Gastrocnemius medialis (tissue), 4 donors: ENCODE measurements at regions of chr14 and their contacts with region 1.

Region 1: DNA sequence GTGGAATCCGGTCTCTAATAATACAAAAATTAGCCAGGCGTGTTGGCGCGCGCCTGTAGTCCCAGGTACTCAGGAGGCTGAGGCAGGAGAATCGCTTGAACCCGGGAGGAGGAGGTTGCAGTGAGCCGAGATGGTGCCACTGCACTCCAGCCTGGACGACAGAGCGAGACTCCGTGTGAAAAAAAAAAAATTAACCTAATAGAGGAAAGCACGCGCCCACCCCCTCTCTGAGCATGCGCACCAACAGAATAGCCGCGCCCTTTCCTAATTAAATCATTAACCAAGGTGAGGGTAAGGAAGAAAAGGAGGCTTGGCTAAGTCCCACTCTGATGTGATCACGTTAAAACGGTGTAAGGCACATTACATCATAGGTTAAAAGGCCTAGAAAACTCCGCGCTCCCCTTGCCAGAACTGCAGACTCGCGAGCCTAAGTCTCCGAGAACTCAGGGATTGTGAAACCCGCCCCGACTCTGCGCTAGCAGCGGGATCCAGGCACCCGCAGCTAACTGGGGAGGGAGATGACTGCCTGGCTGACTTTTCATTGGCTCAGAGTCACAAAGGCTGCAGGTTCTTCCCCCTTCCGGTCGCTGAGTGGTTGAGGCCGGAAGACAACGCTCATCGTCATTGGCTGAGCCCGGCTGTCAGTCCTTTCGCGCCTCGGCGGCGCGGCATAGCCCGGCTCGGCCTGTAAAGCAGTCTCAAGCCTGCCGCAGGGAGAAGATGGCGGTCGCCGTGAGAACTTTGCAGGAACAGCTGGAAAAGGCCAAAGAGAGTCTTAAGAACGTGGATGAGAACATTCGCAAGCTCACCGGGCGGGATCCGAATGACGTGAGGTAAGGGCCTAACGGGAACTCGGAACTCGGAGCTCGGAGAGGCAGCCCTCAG is at the start of gene PNN:
- DNase-seq: peak; percentile 98 to 99
- ATAC-seq: peak; percentile 94 to 97
- H3K4me3 ChIP-seq: peak within 1 kb of the TSS; percentile 71 to 96 (median 88)
- H3K27ac ChIP-seq: peak within 1 kb of the TSS; percentile 90 to 95 (median 93)
- H3K4me1 ChIP-seq: peaks cover 18 to 21% of the 10 kb centered on the region in 2 donors
- H3K27me3 ChIP-seq: no peaks in the 10 kb centered on the region
- CTCF ChIP-seq: no peak
- POLR2A ChIP-seq: peak; percentile 92 to 94
- total RNA-seq, gene PNN: 9.2 to 16.2 (median 13.7) TPM

Region 2: DNA sequence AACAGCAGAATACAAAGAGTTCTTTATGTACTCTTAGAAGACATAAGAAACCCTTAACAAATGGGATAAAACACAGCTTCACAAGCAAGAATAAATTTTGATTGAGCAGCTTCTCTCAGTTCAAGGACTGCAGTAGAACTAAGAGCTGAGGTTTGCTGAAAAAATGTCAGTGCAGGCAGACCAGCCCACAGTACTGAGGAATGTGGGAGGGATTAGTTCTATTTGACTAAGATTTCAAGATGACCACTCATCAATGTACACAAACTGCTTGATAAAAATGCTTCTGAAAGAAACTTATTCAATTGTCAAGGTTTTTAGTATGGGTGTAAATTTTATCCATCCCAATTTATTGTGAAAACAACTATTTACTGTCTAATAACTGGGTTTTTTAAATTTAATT is 210.2 kb before region 1 on chr14:
- in situ Hi-C with region 1: no loop called
- intact Hi-C with region 1: no loop called
- DNase-seq: no peak
- ATAC-seq: no peak
- H3K4me3 ChIP-seq: no peak overlapping the region
- H3K27ac ChIP-seq: no peak overlapping the region
- H3K4me1 ChIP-seq: no peaks in the 10 kb centered on the region
- H3K27me3 ChIP-seq: no peaks in the 10 kb centered on the region
- CTCF ChIP-seq: no peak
- POLR2A ChIP-seq: no peak

Region 3: DNA sequence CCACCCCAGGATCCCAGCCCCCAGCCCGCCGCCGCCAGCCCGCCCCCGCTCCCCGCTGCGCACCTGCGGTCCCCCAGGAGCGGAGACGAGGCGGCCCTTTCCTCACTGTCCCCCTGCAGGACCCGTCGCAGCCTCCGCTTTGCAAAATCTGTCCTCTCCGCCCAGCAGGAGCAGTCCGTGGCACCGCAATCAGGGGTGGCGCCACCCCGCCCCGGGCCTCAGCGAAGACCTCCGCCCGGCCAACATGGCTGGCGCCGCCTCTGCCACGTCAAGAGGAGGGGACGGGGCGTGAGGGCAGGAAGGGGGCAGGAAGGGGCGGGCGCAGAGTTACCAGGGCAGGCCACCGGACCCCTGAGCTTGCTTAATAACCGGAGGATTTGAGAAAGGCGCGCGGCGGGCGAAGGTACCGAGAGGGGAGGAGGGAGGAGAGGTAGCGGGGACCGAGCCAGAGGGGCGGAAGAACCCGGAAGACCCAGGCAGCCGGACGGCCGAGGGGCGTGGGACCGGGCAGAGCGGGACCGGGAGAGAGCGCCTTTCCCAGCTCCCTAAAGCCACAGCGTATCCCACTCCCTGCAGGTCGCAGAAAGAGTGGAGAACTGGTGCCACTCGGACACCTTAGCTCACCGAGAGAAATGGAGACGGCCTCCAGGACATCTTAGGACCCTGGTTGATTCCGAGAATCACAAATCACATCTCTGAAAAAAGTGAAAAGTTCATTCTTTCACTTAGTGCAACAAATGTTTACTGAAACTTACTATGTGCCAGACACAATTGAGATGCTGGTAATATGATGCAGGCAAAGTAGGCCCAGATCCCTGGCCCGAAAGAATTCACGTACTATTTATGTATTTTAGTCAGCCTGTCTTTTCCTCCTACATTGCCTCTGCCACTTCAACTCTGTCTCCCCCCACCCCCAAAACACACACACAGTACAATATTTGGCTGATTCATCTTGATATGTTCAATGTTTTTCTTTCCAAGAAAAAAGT is 71.5 kb before region 1 on chr14 and contains the start of gene SEC23A:
- in situ Hi-C with region 1: no loop called
- intact Hi-C with region 1: loop called (anchors 1 kb)
- DNase-seq: peak; percentile 79 to 90
- ATAC-seq: peak; percentile 93 to 94
- H3K4me3 ChIP-seq: peak within 1 kb of the TSS; percentile 69 to 88 (median 77)
- H3K27ac ChIP-seq: peak within 1 kb of the TSS; percentile 84 to 97 (median 95)
- H3K4me1 ChIP-seq: peaks cover 6 to 23% of the 10 kb centered on the region in 2 donors
- H3K27me3 ChIP-seq: no peaks in the 10 kb centered on the region
- CTCF ChIP-seq: no peak
- POLR2A ChIP-seq: peak; percentile 84
- total RNA-seq, gene SEC23A: 79.9 to 183 (median 93.9) TPM

Region 4: DNA sequence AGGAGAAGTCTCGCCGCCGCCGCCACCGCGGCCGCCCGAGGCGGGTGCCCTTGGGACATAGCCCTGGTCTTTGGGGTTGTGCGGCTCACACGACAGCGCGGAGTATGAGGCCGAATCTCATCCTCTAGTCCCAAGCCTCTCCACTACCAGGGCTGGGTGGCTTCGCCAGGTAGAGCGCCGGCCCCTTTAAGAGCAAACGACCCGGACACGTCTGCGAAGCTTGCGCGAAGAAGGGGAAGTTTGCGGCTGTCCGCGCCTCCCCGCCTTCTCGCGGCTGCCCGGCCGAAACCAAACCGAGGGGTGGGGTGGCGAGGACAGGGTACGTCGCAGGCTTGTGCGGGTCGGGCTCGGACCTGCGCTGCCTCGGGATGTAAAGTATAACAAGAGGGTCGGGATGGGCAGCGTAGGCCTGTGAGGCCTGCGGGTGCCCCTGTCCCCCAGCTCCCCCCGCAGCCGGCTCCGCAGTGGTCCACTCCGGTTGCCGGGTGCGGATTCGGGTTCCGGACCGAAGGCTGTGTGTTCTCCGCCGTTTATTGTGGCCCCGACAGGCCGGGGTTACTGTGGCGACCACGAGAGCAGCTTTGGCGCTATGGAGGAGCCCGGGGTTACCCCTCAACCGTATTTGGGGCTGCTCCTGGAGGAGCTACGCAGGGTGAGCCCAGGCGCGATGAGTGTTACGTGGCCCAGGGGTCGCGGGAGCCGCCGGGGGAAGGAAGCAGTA is 92.2 kb after region 1 on chr14:
- in situ Hi-C with region 1: loop called in 1 of 4 experiments (anchors 10 kb)
- intact Hi-C with region 1: loop called (anchors 1 kb)
- DNase-seq: peak; percentile 71 to 82
- ATAC-seq: peak; percentile 83 to 88
- H3K4me3 ChIP-seq: peak overlapping the region; percentile 77 to 97 (median 91)
- H3K27ac ChIP-seq: peak overlapping the region; percentile 95 to 99 (median 98)
- H3K4me1 ChIP-seq: peaks cover 27 to 33% of the 10 kb centered on the region in 2 donors
- H3K27me3 ChIP-seq: no peaks in the 10 kb centered on the region
- CTCF ChIP-seq: peak in 2 of 5 experiments; percentile 17 to 26
- POLR2A ChIP-seq: peak; percentile 70 to 77

Region 5: DNA sequence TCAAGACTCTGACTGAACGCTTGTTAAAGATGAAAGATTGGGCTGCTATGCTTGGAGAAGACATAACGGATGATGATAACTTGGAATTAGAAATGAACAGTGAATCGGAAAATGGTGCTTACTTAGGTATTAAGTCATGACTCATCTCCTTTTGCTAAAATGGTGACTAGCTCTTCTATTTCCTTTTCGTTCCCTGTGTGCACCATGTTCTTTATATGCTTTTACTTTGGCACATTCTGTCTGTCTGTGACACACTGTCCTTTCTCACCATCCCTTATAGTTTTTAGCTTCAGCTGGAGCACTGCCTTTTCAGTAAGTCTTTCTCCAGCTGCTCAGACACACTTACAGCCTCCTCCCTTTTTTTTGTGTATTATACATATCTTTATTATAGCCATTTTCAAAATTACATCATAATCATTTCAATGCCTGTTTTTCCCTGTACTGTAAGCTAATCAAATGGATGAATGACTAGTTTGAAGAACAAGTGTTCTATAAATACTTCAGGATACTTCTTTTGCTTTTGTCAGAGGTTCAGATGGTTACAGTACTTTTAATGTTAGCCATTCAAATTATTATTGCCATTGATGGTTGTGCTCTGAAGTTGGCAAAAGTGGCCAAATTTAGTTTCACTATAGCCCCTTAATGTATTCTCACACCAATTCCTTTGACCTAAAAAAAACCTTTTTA is 127.5 kb after region 1 on chr14:
- in situ Hi-C with region 1: no loop called
- intact Hi-C with region 1: no loop called
- DNase-seq: no peak
- ATAC-seq: peak; percentile 27 to 45
- H3K4me3 ChIP-seq: no peak overlapping the region
- H3K27ac ChIP-seq: peak overlapping the region in 3 of 4 donors; percentile 31 to 62 (median 50)
- H3K4me1 ChIP-seq: peaks cover 0 to 16% of the 10 kb centered on the region in 2 donors
- H3K27me3 ChIP-seq: no peaks in the 10 kb centered on the region
- CTCF ChIP-seq: no peak
- POLR2A ChIP-seq: no peak

Region 6: DNA sequence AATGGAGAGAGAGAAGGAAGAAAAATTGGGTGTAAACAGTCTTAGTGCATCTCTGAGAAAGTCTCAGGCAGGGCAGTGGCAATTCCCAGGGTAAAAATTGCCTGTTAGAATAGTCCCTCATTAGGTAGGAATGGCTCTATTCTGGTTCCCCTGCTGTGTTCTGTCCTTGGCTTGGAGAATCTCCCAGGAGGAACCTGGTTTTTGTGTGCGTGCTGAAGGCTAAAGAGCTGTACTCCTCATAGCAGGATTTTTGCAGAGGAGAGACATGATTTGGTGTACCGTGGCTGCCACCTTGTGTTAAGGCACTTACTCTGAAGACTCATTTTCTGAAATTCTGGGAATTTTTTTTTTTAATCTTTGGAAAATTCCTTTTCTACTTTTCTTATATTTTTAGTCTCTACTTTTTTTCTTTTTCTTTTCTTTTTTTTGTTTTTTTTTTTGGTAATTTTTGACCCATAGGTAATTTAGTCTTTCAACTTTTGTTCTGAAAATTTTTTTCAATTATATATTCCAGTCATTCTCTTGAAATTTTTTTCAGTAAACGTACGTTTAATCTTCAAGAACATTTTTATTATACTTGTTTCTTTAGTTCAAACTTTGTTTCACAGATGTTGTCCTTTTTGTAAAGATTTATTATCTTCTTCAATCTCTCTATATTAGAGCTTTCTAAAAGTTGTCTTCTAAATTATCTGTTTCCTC is 193.6 kb after region 1 on chr14:
- in situ Hi-C with region 1: no loop called
- intact Hi-C with region 1: loop called (anchors 5 kb)
- DNase-seq: peak; percentile 14 to 39
- ATAC-seq: peak; percentile 82 to 85
- H3K4me3 ChIP-seq: no peak overlapping the region
- H3K27ac ChIP-seq: peak overlapping the region in 2 of 4 donors; percentile 19 to 42
- H3K4me1 ChIP-seq: peaks cover 16 to 23% of the 10 kb centered on the region in 2 donors
- H3K27me3 ChIP-seq: no peaks in the 10 kb centered on the region
- CTCF ChIP-seq: peak in 3 of 5 experiments; percentile 36 to 50 (median 43)
- POLR2A ChIP-seq: no peak

Region 7: DNA sequence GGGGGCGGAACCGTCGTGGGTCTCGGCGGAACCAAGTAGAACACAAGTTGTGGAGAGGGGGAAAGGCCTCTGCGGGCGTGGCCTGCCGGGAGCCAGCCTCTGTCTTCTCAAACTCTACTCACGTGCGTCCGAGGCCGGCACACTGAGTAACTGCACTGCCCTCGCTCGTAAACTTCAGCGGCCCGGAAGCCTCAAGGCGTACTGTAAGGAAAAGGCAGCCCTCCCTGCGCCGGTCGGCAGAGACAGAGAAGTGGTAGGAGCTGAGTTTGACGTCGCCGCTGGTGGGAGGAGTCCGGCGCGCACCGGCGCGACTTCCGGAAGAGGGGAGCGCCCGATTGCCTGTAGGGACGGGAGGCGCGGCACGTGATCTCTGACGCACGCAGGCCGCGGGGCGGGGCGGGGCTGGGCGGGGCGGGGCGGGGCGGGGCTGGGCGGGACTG is 257.4 kb after region 1 on chr14 and contains the start of gene FBXO33:
- in situ Hi-C with region 1: loop called in 2 of 4 experiments (anchors 10 kb)
- intact Hi-C with region 1: loop called (anchors 1 kb)
- DNase-seq: peak; percentile 93 to 96
- ATAC-seq: peak; percentile 87 to 89
- H3K4me3 ChIP-seq: peak within 1 kb of the TSS; percentile 83 to 94 (median 94)
- H3K27ac ChIP-seq: peak within 1 kb of the TSS; percentile 96 to 99 (median 97)
- H3K4me1 ChIP-seq: peaks cover 35 to 37% of the 10 kb centered on the region in 2 donors
- H3K27me3 ChIP-seq: no peaks in the 10 kb centered on the region
- CTCF ChIP-seq: no peak
- POLR2A ChIP-seq: no peak
- total RNA-seq, gene FBXO33: 5.3 to 8.0 (median 5.9) TPM